ENCODE measurements at regions of chr10 and their contacts with region 1.

Region 1: GRCh38 chr10:23095404-23095965 is at the start of gene MSRB2:
- DNase-seq: peak; percentile 37 to 93 (median 69)
- ATAC-seq: peak; percentile 68
- H3K4me3 ChIP-seq: peak within 1 kb of the TSS; percentile 53 to 67
- H3K4me3 Mint-ChIP-seq: peak within 1 kb of the TSS; percentile 83
- H3K27ac ChIP-seq: peak within 1 kb of the TSS; percentile 44 to 61
- H3K27ac Mint-ChIP-seq: peak within 1 kb of the TSS; percentile 85
- H3K4me1 ChIP-seq: peaks cover 15% of the 10 kb centered on the region
- H3K4me1 Mint-ChIP-seq: peaks cover 28% of the 10 kb centered on the region
- H3K27me3 ChIP-seq: no peaks in the 10 kb centered on the region
- H3K27me3 Mint-ChIP-seq: no peaks in the 10 kb centered on the region
- CTCF ChIP-seq: no peak
- total RNA-seq, gene MSRB2: 1.0 to 1.1 TPM

Region 2: DNA sequence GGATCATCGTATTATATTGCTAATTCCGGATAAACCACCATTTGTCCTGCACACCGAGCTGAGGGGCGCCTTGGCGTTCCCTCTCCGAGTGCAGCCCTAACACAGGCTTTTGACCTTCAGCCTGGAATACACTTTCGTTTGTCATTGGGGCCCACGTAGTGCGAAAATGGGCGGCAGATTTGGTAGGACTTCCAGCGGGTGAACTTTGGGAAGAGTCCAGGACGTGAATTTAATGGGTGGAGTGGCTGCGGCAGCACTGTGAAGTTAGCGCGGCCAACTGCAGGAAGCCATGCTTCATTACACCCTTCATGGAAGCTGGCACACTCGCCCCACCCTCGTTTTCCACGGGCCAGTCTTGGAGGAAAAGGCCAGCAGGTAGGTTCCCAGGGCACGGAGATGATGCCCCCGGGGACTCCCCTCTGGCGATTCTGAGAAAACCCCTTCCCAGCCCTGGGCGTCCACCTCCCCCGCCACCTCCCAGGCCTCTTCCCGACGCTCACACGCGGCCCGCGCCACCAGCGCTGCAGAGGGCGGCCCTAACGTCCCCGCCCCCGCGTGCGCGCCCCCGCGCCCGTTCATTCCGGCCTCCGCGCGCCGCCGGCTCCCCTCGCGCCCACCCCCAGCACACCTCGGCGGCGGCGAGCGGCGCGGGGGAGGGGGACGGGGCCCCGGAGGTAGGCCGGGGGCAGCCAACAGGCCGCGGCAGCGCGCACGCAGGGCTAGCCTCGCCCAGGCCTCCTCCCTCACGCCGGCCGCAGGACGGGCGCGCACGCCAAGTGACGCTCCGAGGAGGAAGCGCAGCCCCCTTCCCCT is 1561.8 kb before region 1 on chr10 and contains the start of gene MLLT10:
- CTCF ChIA-PET with region 1: no interaction called
- POLR2A ChIA-PET with region 1: no interaction called
- intact Hi-C with region 1: loop called in 1 of 2 experiments (anchors 10 kb)
- DNase-seq: peak; percentile 83 to 98 (median 92)
- ATAC-seq: peak; percentile 84
- H3K4me3 ChIP-seq: peak within 1 kb of the TSS; percentile 69 to 81
- H3K4me3 Mint-ChIP-seq: peak within 1 kb of the TSS; percentile 96
- H3K27ac ChIP-seq: peak within 1 kb of the TSS; percentile 64 to 75
- H3K27ac Mint-ChIP-seq: peak within 1 kb of the TSS; percentile 94
- H3K4me1 ChIP-seq: peaks cover 16% of the 10 kb centered on the region
- H3K4me1 Mint-ChIP-seq: peaks cover 29% of the 10 kb centered on the region
- H3K27me3 ChIP-seq: no peaks in the 10 kb centered on the region
- H3K27me3 Mint-ChIP-seq: no peaks in the 10 kb centered on the region
- CTCF ChIP-seq: peak; percentile 22
- total RNA-seq, gene MLLT10: 36.7 to 41.0 TPM